Mammary epithelial cell (primary cell): ENCODE measurements at regions of chr17 and their contacts with region 1.

Region 1: DNA sequence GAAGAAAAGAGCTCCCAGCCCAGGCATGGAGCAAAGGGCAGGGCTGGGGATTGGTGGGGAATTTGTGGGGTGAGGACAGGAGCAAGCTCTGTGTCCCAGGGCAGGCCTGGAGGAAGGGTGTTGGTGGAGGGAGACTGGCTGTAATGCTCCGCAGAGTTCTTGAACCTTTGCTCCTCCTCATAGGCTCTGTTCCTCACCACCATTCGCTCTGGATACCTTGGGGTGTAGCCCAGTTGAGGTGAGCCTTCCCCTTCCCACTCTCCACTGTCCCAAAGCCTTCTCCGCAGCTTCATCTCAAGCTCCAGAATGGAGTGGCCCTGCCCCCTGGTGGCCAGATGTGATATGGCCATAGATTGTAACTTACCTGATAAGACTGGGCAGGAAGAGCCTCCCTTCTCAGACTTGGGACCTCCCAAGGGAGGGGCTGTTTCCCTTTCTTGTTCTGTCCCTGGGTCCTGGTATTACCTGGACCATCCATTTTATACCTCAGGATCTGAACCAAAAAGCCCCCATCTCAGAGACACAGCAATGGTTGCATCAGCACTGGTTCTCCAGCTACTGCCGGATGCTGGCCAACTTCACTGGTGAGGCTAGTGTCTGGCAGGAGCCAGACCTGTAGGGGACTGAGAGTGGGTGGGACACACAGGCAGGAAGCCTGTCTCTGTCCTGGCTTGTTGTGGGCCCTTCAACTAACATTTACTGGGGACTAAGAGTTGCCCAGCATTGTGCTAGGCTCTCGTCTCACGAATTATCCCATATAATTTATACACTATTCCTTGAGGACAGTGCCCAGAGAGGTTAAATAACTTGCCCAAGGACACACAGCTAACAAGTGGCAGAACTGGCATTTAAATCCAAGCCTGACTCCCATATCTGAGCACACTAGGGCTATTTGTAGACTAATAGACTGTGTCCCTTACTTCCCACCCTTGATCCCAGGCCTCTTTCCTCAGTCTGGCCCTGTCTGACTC is 19.1 kb upstream of the STAC2 start:
- DNase-seq: peak; percentile 75
- H3K4me3 ChIP-seq: no peak overlapping the region
- H3K27ac ChIP-seq: no peak overlapping the region
- H3K4me1 ChIP-seq: peaks cover 8% of the 10 kb centered on the region
- H3K27me3 ChIP-seq: no peaks in the 10 kb centered on the region
- CTCF ChIP-seq: peak; percentile 90 to 95

Region 2: GRCh38 chr17:38970128-38970527 is 274.8 kb before region 1 on chr17:
- CTCF ChIA-PET with region 1: no interaction called
- dilution Hi-C with region 1: loop called (anchors 5 kb)
- in situ Hi-C with region 1: no loop called
- intact Hi-C with region 1: no loop called
- DNase-seq: no peak
- H3K4me3 ChIP-seq: no peak overlapping the region
- H3K27ac ChIP-seq: no peak overlapping the region
- H3K4me1 ChIP-seq: no peaks in the 10 kb centered on the region
- H3K27me3 ChIP-seq: no peaks in the 10 kb centered on the region
- CTCF ChIP-seq: peak in 1 of 2 donors; percentile 20

Region 3: GRCh38 chr17:39069114-39069756 is 175.7 kb before region 1 on chr17:
- CTCF ChIA-PET with region 1: no interaction called
- dilution Hi-C with region 1: no loop called
- in situ Hi-C with region 1: no loop called
- intact Hi-C with region 1: loop called (anchors 2 kb)
- DNase-seq: peak; percentile 32
- H3K4me3 ChIP-seq: no peak overlapping the region
- H3K27ac ChIP-seq: no peak overlapping the region
- H3K4me1 ChIP-seq: peaks cover 19% of the 10 kb centered on the region
- H3K27me3 ChIP-seq: no peaks in the 10 kb centered on the region
- CTCF ChIP-seq: peak; percentile 70 to 75

Region 4: DNA sequence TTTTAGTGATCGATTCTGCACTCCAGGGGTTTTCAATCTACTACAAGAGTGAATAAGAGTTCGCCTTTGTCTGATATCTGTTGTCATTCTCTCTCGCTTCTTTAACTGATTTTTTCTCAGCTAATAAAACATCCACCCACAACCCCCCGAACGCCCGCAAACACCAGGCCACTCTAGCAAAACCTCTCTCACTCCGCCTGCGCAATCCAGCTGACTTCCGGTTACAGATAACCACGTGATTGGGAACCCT is 45.1 kb before region 1 on chr17:
- CTCF ChIA-PET with region 1: interaction called, 3 read pairs
- dilution Hi-C with region 1: loop called (anchors 5 kb)
- in situ Hi-C with region 1: no loop called
- intact Hi-C with region 1: no loop called
- DNase-seq: peak; percentile 85
- H3K4me3 ChIP-seq: peak overlapping the region; percentile 72 to 91 (median 84)
- H3K27ac ChIP-seq: peak overlapping the region; percentile 100
- H3K4me1 ChIP-seq: peaks cover 33% of the 10 kb centered on the region
- H3K27me3 ChIP-seq: no peaks in the 10 kb centered on the region
- CTCF ChIP-seq: no peak

Region 5: DNA sequence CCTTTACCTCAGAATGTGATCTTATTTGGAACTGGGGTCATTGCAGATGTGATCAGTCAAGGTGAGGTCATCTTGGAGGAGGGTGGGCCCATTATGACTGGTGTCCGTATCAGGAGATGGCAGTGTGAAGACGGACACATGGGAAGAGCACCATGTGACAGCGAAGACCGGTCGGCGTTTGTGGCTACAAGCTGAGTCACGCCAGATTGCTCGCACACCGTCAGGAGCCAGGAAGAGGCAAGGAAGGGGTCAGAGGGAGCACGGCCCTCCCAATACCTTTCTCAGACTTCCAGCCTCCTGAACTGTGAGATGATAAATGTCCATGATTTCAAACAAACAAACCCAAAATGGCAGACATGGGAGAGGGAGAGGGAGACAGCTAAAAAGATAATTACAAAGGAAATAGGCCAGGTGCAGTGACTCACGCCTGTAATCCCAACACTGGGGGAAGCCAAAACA is 405.3 kb after region 1 on chr17:
- CTCF ChIA-PET with region 1: interaction called, 11 read pairs
- dilution Hi-C with region 1: no loop called
- in situ Hi-C with region 1: no loop called
- intact Hi-C with region 1: no loop called
- DNase-seq: no peak
- H3K4me3 ChIP-seq: no peak overlapping the region
- H3K27ac ChIP-seq: no peak overlapping the region
- H3K4me1 ChIP-seq: no peaks in the 10 kb centered on the region
- H3K27me3 ChIP-seq: no peaks in the 10 kb centered on the region
- CTCF ChIP-seq: no peak